ENCODE measurements at regions of chr6 and their contacts with region 1.

Region 1: DNA sequence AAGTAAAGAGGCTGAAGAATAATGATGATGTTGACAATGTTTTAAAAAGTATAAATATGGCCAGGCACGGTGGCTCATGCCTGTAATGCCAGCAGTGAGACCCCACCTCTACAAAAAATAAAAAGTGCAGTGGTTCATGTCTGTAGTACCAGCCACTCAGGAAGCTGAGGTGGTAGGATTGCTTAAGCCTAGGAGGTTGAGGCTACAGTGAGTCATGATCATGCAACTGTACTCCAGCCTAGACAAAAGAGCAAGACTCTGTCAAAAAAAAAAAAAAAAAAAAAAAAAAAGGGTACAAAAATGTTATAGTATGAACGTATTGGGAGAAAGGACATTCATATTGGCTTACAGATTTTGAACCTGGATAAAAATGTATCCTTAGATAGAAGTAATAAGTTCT is 543.1 kb upstream of the IRAK1BP1 start:
- DNase-seq: no peak
- H3K4me3 ChIP-seq: no peak overlapping the region
- CTCF ChIP-seq: no peak
- POLR2A ChIP-seq: no peak

Region 2: DNA sequence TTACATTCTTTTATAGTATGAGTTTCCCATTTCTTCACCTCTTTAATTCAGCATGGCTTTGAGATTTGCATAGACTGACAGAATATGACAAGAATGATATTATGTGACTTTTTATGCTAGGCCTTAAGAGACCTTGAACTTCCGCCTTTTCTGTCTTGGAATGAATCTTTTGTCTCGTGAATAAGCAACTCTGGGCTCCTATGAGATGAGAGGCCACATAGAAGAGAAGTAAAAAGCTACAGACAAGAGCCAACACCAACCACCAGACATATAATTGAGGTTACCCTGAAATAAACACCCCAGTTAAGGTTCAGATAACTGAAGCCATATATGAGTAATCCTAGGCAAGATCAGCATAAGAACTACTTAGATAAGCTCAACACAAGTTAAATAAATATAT is 70.6 kb before region 1 on chr6:
- intact Hi-C with region 1: loop called (anchors 2 kb)
- DNase-seq: no peak
- H3K4me3 ChIP-seq: no peak overlapping the region
- CTCF ChIP-seq: no peak
- POLR2A ChIP-seq: no peak